ENCODE measurements at regions of chr3 and their contacts with region 1.

Region 1: GRCh38 chr3:185623939-185624665 is 38.0 kb downstream of the SENP2 start:
- DNase-seq: no peak
- H3K4me3 ChIP-seq: no peak overlapping the region
- H3K27ac ChIP-seq: peak overlapping the region in 1 of 2 experiments; percentile 14
- H3K4me1 ChIP-seq: no peaks in the 10 kb centered on the region
- H3K27me3 ChIP-seq: no peaks in the 10 kb centered on the region

Region 2: DNA sequence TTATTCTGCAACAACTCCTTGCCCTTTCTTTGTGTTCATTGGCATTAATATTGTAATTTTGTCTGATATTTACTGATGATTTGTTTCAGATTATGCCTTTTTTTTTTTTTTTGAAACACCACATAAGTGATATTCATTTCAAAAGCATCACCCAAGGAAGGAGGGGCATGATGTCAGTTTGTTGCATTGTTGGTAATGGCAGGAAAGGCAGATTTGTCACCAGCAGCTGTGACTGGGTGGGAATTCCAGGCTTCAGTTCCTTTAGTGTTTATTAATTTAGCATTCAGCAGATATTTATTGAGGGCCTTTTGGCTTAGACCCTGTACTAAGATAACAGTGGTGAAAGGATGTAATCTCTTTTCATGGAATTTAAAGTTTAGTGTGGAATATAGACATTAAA is 18.5 kb before region 1 on chr3:
- CTCF ChIA-PET with region 1: interaction called, 10 read pairs
- POLR2A ChIA-PET with region 1: no interaction called
- DNase-seq: no peak
- H3K4me3 ChIP-seq: no peak overlapping the region
- H3K27ac ChIP-seq: no peak overlapping the region
- H3K4me1 ChIP-seq: no peaks in the 10 kb centered on the region
- H3K27me3 ChIP-seq: no peaks in the 10 kb centered on the region